K562 (cell line): ENCODE measurements at regions of chr7 and their contacts with region 1.

Region 1: DNA sequence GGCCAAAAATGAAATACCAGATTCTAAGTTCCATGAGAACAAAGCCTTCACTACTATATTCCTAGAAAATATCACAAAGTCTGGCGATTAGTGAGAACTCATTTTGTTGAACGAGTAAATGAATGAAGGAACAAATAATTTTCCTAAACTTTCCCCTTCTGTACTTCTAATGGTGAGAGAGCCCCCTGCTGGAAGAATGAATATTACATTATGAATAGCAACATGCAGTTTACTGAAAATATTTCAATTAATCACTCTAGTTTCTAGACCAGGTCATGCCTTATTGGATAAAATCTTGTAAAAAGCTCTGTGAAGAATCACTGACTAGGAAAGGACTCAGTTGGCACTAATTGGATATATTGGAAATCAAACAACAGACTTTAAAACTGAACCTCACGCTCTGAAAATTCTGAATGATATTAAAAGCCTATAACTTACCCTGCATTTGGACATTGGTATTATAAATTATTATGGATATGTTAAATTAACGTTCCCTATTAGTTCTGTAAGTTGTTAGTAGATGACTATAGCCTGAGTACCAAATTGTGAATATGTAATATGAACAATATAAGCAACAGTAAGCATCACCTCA is 32.4 kb upstream of the MTPN start:
- DNase-seq: peak; percentile 52 to 79 (median 57)
- ATAC-seq: peak; percentile 81
- H3K4me3 ChIP-seq: no peak overlapping the region
- H3K27ac ChIP-seq: no peak overlapping the region
- H3K4me1 ChIP-seq: no peaks in the 10 kb centered on the region
- H3K27me3 ChIP-seq: no peaks in the 10 kb centered on the region
- CTCF ChIP-seq: peak; percentile 54 to 95 (median 71); a peak in 4 of 6 replicates
- EP300 ChIP-seq: peak; percentile 44; the same call in 1 of the 2 replicates
- POLR2A ChIP-seq: no peak
- RAD21 ChIP-seq: peak; percentile 99 to 100

Region 2: DNA sequence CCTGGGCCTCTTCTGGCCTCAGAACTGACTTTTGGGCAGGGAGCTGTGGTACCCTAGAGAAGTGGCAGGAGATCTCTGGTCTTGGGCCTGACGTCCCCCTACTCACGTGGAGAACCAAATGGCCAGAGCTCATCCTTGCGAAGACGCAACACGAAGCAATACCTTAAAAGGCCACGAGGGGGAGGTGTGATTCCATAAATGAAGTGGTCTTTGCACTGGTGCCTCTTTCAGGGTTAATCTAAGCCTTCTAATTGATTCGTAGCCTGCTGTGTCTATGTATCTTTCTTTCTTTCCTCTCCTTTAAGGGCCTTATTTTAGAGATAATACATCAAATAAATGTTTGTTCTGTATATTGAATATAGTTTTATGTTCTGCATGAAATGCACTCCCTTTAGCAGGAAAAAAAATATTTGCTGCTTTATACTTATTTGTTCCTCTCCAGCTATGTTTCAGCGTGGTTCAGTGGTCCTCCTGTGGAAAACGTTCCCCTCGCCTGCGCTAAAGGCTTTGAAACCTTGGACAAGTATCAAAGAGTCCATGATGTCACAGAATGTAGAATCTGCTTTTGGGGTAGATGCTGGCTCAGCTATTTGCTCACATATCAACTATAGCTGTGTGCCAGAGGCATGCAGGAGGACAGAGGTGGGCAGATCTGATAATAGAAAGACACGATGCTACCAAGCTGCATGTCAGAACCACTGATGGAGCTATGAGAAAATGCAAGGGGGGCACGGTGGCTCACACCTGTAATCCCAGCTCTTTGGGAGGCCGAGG is 734.9 kb before region 1 on chr7:
- CTCF ChIA-PET with region 1: no interaction called
- POLR2A ChIA-PET with region 1: no interaction called
- in situ Hi-C with region 1: loop called (anchors 10 kb)
- intact Hi-C with region 1: no loop called
- DNase-seq: peak; percentile 77 to 88 (median 83)
- ATAC-seq: peak; percentile 95
- H3K4me3 ChIP-seq: no peak overlapping the region
- H3K27ac ChIP-seq: no peak overlapping the region
- H3K4me1 ChIP-seq: peaks cover 0 to 4% of the 10 kb centered on the region in 2 experiments; a peak in 1 of 5 replicates
- H3K27me3 ChIP-seq: peaks cover 22 to 40% of the 10 kb centered on the region in 2 experiments
- CTCF ChIP-seq: peak; percentile 80 to 96 (median 94)
- EP300 ChIP-seq: no peak
- POLR2A ChIP-seq: no peak
- RAD21 ChIP-seq: peak; percentile 81 to 92

Region 3: GRCh38 chr7:135672560-135673359 is 336.8 kb before region 1 on chr7:
- CTCF ChIA-PET with region 1: interaction called, 4 read pairs
- POLR2A ChIA-PET with region 1: no interaction called
- in situ Hi-C with region 1: no loop called
- intact Hi-C with region 1: loop called (anchors 1 kb)
- DNase-seq: peak; percentile 64 to 78 (median 69)
- ATAC-seq: peak; percentile 91
- H3K4me3 ChIP-seq: no peak overlapping the region
- H3K27ac ChIP-seq: no peak overlapping the region
- H3K4me1 ChIP-seq: peaks cover 0 to 3% of the 10 kb centered on the region in 2 experiments; a peak in 1 of 5 replicates
- H3K27me3 ChIP-seq: no peaks in the 10 kb centered on the region
- CTCF ChIP-seq: peak; percentile 82 to 92 (median 89)
- EP300 ChIP-seq: no peak; the same call in 1 of the 2 replicates
- POLR2A ChIP-seq: no peak
- RAD21 ChIP-seq: peak; percentile 79 to 80

Region 4: DNA sequence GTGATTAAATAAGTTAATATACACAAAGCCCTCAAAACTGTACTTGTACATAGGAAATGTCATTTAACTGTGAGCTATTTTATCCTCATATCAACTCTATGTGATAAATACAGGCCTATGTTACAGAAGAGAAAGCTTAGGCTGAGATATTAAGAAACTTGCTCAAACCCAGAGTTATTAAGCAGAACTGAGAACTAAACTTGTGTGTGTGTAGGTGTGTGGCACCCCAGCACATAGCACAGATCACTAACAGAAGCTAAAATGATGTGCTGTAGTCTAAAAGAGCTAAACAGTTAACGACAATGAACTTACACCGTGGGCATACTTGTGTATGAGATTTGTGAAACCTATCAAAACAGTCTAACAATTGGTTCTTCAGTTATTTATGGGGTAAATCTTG is 67.0 kb before region 1 on chr7:
- CTCF ChIA-PET with region 1: no interaction called
- POLR2A ChIA-PET with region 1: no interaction called
- in situ Hi-C with region 1: no loop called
- intact Hi-C with region 1: loop called (anchors 5 kb)
- DNase-seq: no peak
- ATAC-seq: peak; percentile 28
- H3K4me3 ChIP-seq: no peak overlapping the region
- H3K27ac ChIP-seq: peak overlapping the region; percentile 74
- H3K4me1 ChIP-seq: peaks cover 23 to 77% of the 10 kb centered on the region in 2 experiments
- H3K27me3 ChIP-seq: no peaks in the 10 kb centered on the region
- CTCF ChIP-seq: no peak
- EP300 ChIP-seq: no peak
- POLR2A ChIP-seq: no peak
- RAD21 ChIP-seq: no peak

Region 5: DNA sequence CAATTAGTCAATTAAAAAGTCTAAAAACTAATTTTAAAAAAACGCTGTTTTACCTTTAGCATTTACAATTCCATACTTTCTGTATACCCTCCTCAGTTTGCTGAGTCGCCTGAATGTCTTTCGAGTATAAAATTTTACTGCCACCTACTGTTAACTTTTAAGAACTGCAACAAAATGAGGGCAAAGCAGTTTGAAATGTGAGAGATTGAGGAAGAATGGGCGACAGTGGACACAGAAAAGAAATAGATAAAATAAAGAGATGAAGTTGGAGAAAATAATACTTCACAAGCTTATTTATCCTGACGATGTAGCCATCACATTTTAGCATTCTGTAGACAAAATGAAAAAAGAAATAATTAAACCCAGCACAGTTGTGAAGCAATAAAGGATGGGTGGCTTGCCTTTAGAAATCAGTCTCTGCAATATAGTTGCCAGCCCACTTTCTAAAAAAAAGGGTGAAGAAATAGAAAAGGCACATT is 1444.7 kb after region 1 on chr7:
- CTCF ChIA-PET with region 1: no interaction called
- POLR2A ChIA-PET with region 1: no interaction called
- in situ Hi-C with region 1: no loop called
- intact Hi-C with region 1: loop called (anchors 5 kb)
- DNase-seq: peak; percentile 32 to 60 (median 54)
- ATAC-seq: peak; percentile 85
- H3K4me3 ChIP-seq: no peak overlapping the region
- H3K27ac ChIP-seq: no peak overlapping the region
- H3K4me1 ChIP-seq: no peaks in the 10 kb centered on the region
- H3K27me3 ChIP-seq: no peaks in the 10 kb centered on the region
- CTCF ChIP-seq: peak; percentile 53 to 76 (median 61); a peak in 5 of 6 replicates
- EP300 ChIP-seq: no peak
- POLR2A ChIP-seq: no peak
- RAD21 ChIP-seq: peak; percentile 78 to 82